Sigmoid colon (tissue), 7 donors: ENCODE measurements at regions of chr19 and their contacts with region 1.

Region 1: DNA sequence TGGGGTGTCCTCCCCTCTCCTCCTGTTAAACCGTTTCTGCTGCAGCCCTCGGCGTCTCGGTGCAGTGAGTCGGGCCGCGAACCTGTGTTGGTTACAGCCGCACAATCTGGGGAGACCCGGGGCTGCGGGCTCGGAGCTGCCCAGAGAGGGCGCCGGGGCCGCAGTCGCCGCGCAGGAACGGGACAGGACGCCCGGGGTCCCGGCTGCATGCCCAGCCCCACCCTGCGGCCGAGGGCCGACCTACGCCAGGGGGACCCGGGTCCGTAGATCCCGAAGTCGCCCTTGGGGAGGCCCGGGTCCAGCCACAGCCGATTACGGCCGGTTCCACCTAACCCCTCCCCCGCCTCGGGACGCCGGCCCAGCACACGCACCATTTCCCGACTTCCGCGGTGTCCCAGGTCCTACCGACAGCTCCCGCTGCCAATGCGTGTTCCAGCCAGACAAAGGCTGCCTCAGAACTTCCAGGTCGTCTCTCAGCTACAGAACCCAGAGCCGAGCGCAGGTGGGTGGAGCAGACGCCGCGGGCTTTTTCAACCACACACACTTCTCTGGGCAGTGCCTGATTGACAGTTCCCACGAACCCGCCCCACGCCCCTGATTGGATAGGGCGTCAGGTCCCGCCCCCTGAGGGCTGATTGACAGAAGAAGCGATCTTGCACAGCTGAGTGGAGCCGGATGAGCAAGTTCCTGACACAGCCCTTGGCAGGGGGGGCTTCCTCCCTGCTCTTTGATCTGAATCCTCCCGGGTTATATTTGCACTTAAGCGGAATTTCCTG is at the start of gene ZNF443:
- DNase-seq: peak; percentile 99
- H3K4me3 ChIP-seq: peak within 1 kb of the TSS; percentile 69 to 83 (median 78)
- H3K27ac ChIP-seq: peak within 1 kb of the TSS; percentile 88 to 94 (median 90)
- H3K4me1 ChIP-seq: peaks cover 0 to 6% (median 6%) of the 10 kb centered on the region in 4 donors
- H3K27me3 ChIP-seq: no peaks in the 10 kb centered on the region
- CTCF ChIP-seq: no peak
- EP300 ChIP-seq: no peak
- POLR2A ChIP-seq: peak in 1 of 2 donors; percentile 40
- total RNA-seq, gene ZNF443: 3.2 to 5.6 (median 3.6) TPM

Region 2: DNA sequence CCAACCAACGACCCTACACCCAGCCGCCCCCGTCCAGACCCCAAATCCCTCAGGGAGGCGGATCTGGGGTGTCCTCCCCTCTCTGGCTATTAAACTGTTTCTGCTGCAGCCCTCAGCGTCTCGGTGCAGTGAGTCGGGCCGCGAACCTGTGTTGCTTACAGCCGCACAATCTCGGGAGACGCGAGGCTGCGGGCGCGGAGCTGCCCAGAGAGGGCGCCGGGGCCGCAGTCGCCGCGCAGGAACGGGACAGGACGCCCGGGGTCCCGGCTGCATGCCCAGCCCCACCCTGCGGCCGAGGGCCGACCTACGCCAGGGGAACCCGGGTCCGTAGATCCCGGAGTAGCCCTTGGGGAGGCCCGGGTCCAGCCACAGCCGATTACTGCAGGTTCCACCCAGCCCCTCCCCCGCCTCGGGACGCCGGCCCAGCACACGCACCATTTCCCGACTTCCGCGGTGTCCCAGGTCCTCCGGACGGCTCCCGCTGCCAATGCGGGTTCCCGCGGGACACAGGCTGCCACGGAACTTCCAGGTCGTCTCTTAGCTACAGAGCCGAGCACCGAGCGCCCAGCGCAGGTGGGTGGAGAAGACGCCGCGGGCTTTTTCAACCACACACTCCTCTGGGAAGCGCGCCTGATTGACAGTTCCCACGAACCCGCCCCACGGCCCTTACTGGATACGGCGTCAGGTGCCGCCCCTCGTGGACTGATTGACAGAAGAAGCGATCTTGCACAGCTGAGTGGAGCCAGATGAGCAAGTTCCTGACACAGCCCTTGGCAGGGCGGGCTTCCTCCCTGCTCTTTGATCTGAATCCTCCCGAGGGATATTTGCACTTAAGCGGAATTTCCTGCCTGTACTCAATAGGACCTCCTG is 39.9 kb before region 1 on chr19 and contains the start of gene ZNF799:
- intact Hi-C with region 1: loop called (anchors 1 kb)
- DNase-seq: peak; percentile 99
- H3K4me3 ChIP-seq: peak within 1 kb of the TSS; percentile 58 to 79 (median 66)
- H3K27ac ChIP-seq: peak within 1 kb of the TSS; percentile 84 to 92 (median 88)
- H3K4me1 ChIP-seq: peaks cover 0 to 9% (median 5%) of the 10 kb centered on the region in 4 donors
- H3K27me3 ChIP-seq: no peaks in the 10 kb centered on the region
- CTCF ChIP-seq: no peak
- EP300 ChIP-seq: peak in 1 of 4 donors; percentile 57
- POLR2A ChIP-seq: peak in 1 of 2 donors; percentile 79
- total RNA-seq, gene ZNF799: 4.6 to 7.4 (median 5.8) TPM

Region 3: GRCh38 chr19:12484371-12485051 is 43.8 kb after region 1 on chr19 and contains the start of gene ZNF709:
- intact Hi-C with region 1: loop called (anchors 2 kb)
- DNase-seq: peak; percentile 94
- H3K4me3 ChIP-seq: peak within 1 kb of the TSS; percentile 78 to 97 (median 83)
- H3K27ac ChIP-seq: peak within 1 kb of the TSS; percentile 70 to 88 (median 80)
- H3K4me1 ChIP-seq: peaks cover 0 to 22% (median 9%) of the 10 kb centered on the region in 4 donors
- H3K27me3 ChIP-seq: no peaks in the 10 kb centered on the region
- CTCF ChIP-seq: no peak
- EP300 ChIP-seq: no peak
- POLR2A ChIP-seq: peak in 1 of 2 donors; percentile 56
- total RNA-seq, gene ZNF709: 2.4 to 8.3 (median 3.5) TPM

Region 4: DNA sequence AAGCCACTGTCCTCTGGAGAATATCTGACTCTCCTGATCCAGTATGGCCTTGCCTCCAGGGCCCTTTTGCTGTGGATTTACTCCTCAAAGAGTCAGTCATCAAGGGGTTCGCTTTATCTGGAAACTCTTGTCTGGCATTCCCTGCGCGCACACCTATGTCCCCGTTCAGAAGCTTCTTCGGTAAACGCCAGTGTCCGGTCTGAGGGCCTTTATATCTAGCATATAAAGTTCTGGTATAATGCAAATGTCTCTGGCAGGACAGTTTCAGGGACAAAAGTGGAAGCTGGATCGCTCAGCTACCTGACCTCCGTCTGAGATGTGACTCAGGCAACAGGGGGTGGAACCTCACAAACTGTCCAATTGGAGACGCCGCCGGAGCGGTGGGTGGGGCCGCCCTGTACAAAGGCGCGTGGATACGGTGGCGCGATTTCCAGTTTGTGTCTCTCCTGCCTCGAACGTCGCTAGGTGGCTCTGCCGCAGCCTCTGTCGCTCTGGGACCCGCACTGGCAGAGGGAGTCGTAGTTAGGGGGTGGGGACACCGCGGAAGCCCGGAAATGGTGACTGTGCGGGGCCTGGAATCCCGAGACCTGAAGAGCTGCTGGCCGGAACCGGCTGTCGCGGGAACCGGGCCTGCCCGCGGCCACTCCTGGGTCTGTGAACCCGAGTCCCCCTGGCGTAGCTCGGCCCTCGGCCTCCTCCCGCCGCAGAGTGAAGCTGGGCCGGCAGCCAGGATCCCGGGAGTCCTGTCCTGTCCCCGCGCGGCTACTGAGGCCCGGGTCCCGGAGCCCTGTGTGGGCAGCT is 54.5 kb after region 1 on chr19:
- intact Hi-C with region 1: loop called (anchors 5 kb)
- DNase-seq: peak; percentile 97
- H3K4me3 ChIP-seq: peak overlapping the region; percentile 46 to 68 (median 58)
- H3K27ac ChIP-seq: peak overlapping the region; percentile 64 to 85 (median 76)
- H3K4me1 ChIP-seq: peaks cover 0 to 15% (median 7%) of the 10 kb centered on the region in 4 donors
- H3K27me3 ChIP-seq: no peaks in the 10 kb centered on the region
- CTCF ChIP-seq: peak in 1 of 4 experiments; percentile 8
- EP300 ChIP-seq: no peak
- POLR2A ChIP-seq: peak in 1 of 2 donors; percentile 24